ENCODE measurements at regions of chr19 and their contacts with region 1.

Region 1: DNA sequence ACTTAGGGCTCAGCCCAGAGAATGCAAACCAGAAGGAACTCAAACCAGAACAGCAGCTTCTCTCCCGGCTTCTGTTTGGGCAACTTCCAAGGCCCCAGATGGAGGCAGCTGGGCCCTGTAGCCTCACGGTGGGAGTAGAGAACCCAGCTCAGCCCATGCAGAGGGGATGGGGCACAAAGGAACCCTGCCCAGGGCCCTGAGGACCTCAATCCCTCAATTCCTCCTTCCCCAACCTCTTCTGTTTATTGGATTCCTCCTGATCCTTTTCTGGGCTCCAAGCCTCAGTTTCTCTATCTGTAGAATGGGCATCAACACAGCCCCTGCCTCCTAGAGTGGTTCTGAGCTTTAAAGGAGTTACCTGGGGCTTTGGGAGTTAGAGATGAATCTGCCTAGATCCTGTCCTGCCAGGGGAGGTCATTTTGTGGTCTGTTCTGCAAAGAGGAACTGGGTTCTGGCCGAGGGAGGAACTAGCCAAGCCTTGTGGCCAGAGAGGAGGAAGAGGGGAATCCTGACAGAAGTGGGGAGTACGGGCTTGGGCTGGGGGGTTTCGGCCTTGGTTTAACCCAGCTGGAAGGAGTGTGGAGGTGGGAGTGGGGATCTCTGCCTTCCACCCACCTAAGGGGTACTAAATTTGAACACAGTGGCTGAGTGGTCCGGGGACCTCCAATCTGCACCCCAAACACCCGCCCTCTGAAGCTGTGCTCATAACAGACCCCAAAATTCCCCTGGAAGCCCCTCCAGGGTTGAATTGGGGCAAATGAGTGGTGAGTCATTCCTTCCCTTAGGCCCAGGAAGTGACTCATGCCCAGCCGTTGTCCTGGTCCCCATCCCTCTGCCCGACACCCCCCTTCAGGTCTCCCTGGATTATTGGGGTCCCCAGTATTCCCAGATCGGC is 2.7 kb downstream of the ADGRE5 start:
- DNase-seq: peak in 4 of 5 donors; percentile 60 to 87 (median 72)
- H3K4me3 ChIP-seq: peak overlapping the region; percentile 64
- H3K4me3 Mint-ChIP-seq: peak overlapping the region; percentile 84 to 100 (median 93)
- H3K27ac ChIP-seq: peak overlapping the region; percentile 99
- H3K27ac Mint-ChIP-seq: peak overlapping the region; percentile 91 to 99 (median 97)
- H3K4me1 ChIP-seq: peaks cover 33% of the 10 kb centered on the region
- H3K4me1 Mint-ChIP-seq: peaks cover 41 to 60% (median 44%) of the 10 kb centered on the region in 3 donors
- H3K27me3 ChIP-seq: no peaks in the 10 kb centered on the region
- H3K27me3 Mint-ChIP-seq: peaks cover 0 to 16% of the 10 kb centered on the region in 2 donors

Region 2: GRCh38 chr19:14277608-14278007 is 106.3 kb before region 1 on chr19:
- CTCF ChIA-PET with region 1: no interaction called
- POLR2A ChIA-PET with region 1: no interaction called
- DNase-seq: no peak
- H3K4me3 ChIP-seq: no peak overlapping the region
- H3K4me3 Mint-ChIP-seq: no peak overlapping the region
- H3K27ac ChIP-seq: no peak overlapping the region
- H3K27ac Mint-ChIP-seq: no peak overlapping the region
- H3K4me1 ChIP-seq: peaks cover 13% of the 10 kb centered on the region
- H3K4me1 Mint-ChIP-seq: peaks cover 8 to 20% (median 13%) of the 10 kb centered on the region in 3 donors
- H3K27me3 ChIP-seq: no peaks in the 10 kb centered on the region
- H3K27me3 Mint-ChIP-seq: peaks cover 0 to 16% of the 10 kb centered on the region in 2 donors

Region 3: DNA sequence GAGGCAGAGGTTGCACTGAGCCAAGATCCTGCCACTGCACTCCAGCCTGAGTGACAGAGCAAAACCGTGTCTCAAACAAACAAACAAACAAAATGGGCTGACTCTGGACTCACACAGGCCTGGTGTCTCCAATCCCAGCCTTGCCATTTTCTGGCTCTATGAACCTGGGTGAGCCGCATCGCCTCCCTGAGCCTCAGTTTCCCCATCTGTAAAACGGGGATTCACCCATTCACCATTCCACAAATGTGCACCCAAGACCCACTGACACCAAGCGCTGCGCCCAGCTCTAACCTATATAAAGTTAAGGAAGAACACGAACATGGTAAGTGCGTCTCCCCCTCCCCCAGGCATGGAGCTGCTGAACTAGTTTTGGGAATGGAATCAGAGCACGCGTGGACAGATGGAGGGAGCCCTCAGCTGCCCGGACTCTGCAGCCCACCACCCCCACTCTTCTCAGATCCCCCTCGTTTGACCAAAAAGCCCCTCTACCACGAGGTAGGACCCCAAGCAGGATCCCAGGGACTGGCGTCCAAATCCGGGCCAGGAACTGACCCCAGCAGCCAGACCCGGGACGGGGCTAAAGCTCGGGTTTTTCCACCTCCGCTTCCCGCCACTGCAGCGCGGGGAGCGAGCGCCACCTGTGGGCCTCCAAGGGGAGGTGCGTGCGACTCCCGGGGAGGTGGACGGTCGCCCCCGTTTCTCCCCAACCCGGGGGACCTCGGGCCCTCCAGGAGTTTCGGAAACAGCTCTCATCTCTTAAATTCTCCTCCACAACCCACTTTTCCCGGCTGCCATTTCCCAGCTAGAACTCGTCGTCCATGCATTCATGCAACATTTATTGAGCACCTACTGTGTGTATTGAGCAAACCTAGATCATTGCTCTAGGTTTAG is 35.7 kb before region 1 on chr19:
- CTCF ChIA-PET with region 1: interaction called, 20 read pairs
- POLR2A ChIA-PET with region 1: interaction called, 3 read pairs
- DNase-seq: peak; percentile 52 to 75 (median 56)
- H3K4me3 ChIP-seq: peak overlapping the region; percentile 45
- H3K4me3 Mint-ChIP-seq: peak overlapping the region in 5 of 7 donors; percentile 28 to 73 (median 47)
- H3K27ac ChIP-seq: no peak overlapping the region
- H3K27ac Mint-ChIP-seq: peak overlapping the region in 4 of 8 donors; percentile 42 to 65 (median 50)
- H3K4me1 ChIP-seq: peaks cover 24% of the 10 kb centered on the region
- H3K4me1 Mint-ChIP-seq: peaks cover 11 to 24% (median 18%) of the 10 kb centered on the region in 3 donors
- H3K27me3 ChIP-seq: no peaks in the 10 kb centered on the region
- H3K27me3 Mint-ChIP-seq: no peaks in the 10 kb centered on the region

Region 4: GRCh38 chr19:14366498-14366915 is 17.4 kb before region 1 on chr19:
- CTCF ChIA-PET with region 1: interaction called, 186 read pairs
- POLR2A ChIA-PET with region 1: interaction called, 103 read pairs
- DNase-seq: peak; percentile 76 to 96 (median 92)
- H3K4me3 ChIP-seq: peak overlapping the region; percentile 46
- H3K4me3 Mint-ChIP-seq: peak overlapping the region; percentile 47 to 80 (median 70)
- H3K27ac ChIP-seq: peak overlapping the region; percentile 68
- H3K27ac Mint-ChIP-seq: peak overlapping the region; percentile 85 to 100 (median 100)
- H3K4me1 ChIP-seq: peaks cover 88% of the 10 kb centered on the region
- H3K4me1 Mint-ChIP-seq: peaks cover 60 to 79% (median 73%) of the 10 kb centered on the region in 3 donors
- H3K27me3 ChIP-seq: no peaks in the 10 kb centered on the region
- H3K27me3 Mint-ChIP-seq: peaks cover 0 to 13% of the 10 kb centered on the region in 2 donors

Region 5: GRCh38 chr19:14413693-14414181 is 29.8 kb after region 1 on chr19:
- CTCF ChIA-PET with region 1: interaction called, 84 read pairs
- POLR2A ChIA-PET with region 1: interaction called, 11 read pairs
- DNase-seq: no peak
- H3K4me3 ChIP-seq: no peak overlapping the region
- H3K4me3 Mint-ChIP-seq: peak overlapping the region in 5 of 7 donors; percentile 44 to 70 (median 64)
- H3K27ac ChIP-seq: no peak overlapping the region
- H3K27ac Mint-ChIP-seq: peak overlapping the region in 7 of 8 donors; percentile 39 to 98 (median 76)
- H3K4me1 ChIP-seq: peaks cover 86% of the 10 kb centered on the region
- H3K4me1 Mint-ChIP-seq: peaks cover 63 to 88% (median 73%) of the 10 kb centered on the region in 3 donors
- H3K27me3 ChIP-seq: no peaks in the 10 kb centered on the region
- H3K27me3 Mint-ChIP-seq: peaks cover 0 to 13% of the 10 kb centered on the region in 2 donors

Region 6: DNA sequence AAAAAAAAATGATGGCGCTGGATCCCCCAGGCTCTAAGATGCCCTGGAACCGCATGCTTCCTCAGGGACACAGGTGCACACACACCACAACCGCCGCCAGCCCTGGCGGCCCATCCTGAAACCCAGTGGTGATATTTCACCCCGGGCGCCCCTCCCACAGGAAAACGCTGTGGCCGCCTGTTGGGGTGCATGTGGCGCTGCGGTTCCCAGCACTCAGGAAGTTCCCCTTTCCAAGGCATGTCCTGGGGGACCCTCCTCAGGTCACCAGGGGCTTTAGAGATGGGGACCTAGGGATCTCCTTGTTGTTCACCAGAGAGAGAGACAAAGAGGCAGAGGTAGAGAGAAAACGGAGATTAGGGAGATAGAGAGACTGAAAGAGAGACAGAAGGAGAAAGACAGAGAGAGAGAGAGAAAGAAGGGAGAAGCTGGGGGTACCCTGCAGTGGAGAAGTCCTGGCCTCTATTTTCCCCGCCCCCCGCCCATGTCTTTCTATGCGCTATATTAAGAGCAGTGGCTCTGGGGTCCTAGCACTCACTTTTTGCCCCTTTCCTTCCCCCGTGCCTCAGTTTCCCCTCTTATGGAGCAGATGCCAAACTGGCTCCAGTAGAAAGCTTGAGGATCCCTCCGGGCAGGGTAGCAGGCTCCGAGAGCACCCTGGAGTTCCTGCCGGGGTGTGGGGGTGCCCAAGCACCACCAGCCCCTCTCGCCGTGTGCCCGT is 392.1 kb after region 1 on chr19:
- CTCF ChIA-PET with region 1: no interaction called
- POLR2A ChIA-PET with region 1: interaction called, 13 read pairs
- DNase-seq: no peak
- H3K4me3 ChIP-seq: no peak overlapping the region
- H3K4me3 Mint-ChIP-seq: peak overlapping the region in 4 of 7 donors; percentile 5 to 60 (median 36)
- H3K27ac ChIP-seq: peak overlapping the region; percentile 43
- H3K27ac Mint-ChIP-seq: no peak overlapping the region
- H3K4me1 ChIP-seq: no peaks in the 10 kb centered on the region
- H3K4me1 Mint-ChIP-seq: peaks cover 2 to 6% (median 5%) of the 10 kb centered on the region in 3 donors
- H3K27me3 ChIP-seq: no peaks in the 10 kb centered on the region
- H3K27me3 Mint-ChIP-seq: peaks cover 26 to 47% of the 10 kb centered on the region in 2 donors